Mammary epithelial cell (primary cell): ENCODE measurements at regions of chr9 and their contacts with region 1.

Region 1: DNA sequence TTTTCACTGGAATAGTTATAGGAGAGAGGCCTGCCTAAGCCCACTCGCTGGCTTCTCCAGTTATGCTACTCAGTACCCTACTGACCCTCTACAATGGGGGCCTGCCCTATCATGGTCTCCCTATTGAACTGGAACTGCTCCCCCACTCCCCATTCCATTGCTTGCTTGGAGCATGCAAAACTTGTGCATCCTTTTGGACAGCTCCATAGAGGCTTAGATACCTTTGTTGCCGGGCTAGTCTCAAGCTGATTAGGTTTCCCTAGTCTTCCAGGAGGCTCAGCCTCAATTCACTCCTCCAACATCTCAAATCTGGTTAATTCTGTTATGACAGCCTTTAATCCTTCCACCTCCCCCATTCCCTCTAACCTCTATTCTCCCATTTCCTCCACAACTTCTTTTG is 39.9 kb downstream of the KIF24 start:
- DNase-seq: no peak
- H3K4me3 ChIP-seq: no peak overlapping the region
- H3K27ac ChIP-seq: no peak overlapping the region
- H3K4me1 ChIP-seq: no peaks in the 10 kb centered on the region
- H3K27me3 ChIP-seq: no peaks in the 10 kb centered on the region
- CTCF ChIP-seq: no peak

Region 2: DNA sequence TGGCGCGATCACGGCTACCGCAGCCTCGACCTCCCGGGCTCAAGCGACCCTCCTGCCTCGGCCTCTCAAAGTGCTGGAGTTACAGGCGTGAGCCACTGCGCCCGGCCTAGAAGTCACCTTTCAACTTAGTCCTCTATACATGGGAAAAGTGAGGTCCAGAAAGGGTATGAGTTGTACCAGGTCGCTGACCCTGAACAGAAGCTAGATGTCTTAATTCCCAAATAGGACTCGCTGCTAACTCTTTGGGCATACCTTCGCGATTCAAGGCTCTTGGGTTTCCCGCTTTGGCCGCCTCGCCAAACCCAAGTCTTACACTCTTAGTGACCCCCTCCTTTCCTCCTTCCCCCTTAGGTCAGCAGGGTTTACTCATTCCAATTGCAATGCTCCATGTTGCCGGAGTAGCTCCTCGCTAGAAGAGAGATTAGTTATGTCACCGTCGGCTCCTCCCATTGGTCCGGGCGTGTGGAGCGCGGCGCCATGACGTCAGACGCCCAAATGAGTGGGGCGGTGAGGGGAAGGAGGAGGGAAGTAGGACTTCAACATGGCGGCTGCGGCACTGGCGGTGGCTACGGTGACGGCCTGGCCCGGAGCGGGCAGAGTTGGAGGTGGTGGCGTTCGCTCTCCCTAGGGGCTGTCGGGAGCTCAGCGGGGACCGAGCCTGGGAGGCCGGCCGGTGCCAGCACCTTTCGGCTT is 110.5 kb before region 1 on chr9 and contains the start of gene UBAP1:
- CTCF ChIA-PET with region 1: no interaction called
- dilution Hi-C with region 1: no loop called
- in situ Hi-C with region 1: no loop called
- intact Hi-C with region 1: no loop called
- DNase-seq: peak; percentile 98
- H3K4me3 ChIP-seq: peak within 1 kb of the TSS; percentile 69 to 80 (median 79)
- H3K27ac ChIP-seq: peak within 1 kb of the TSS; percentile 83
- H3K4me1 ChIP-seq: peaks cover 17% of the 10 kb centered on the region
- H3K27me3 ChIP-seq: no peaks in the 10 kb centered on the region
- CTCF ChIP-seq: no peak
- total RNA-seq, gene UBAP1: 68.4 to 71.8 TPM

Region 3: DNA sequence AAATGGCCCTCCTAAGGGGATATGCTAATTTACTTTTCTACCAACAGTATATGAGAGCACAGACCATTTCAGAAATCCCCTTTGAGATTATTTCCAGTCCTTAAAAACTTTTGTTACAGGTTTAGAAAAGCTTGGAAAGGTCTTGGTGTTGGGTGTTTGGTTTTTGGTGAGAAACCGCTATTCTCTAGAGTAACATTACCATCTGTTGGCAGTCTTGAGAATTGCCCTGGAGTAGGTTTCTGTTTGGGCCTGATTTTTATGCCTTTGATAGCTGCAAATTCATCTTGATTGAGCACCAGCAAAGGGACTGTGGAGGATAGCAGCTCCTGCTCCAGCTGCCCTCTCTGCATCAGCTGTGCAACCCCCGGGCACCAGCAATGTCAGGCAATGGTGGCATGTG is 48.2 kb after region 1 on chr9:
- CTCF ChIA-PET with region 1: no interaction called
- dilution Hi-C with region 1: loop called (anchors 5 kb)
- in situ Hi-C with region 1: no loop called
- intact Hi-C with region 1: no loop called
- DNase-seq: no peak
- H3K4me3 ChIP-seq: no peak overlapping the region
- H3K27ac ChIP-seq: no peak overlapping the region
- H3K4me1 ChIP-seq: peaks cover 18% of the 10 kb centered on the region
- H3K27me3 ChIP-seq: no peaks in the 10 kb centered on the region
- CTCF ChIP-seq: peak; percentile 11 to 20